ENCODE measurements at regions of chr6 and their contacts with region 1.

Region 1: DNA sequence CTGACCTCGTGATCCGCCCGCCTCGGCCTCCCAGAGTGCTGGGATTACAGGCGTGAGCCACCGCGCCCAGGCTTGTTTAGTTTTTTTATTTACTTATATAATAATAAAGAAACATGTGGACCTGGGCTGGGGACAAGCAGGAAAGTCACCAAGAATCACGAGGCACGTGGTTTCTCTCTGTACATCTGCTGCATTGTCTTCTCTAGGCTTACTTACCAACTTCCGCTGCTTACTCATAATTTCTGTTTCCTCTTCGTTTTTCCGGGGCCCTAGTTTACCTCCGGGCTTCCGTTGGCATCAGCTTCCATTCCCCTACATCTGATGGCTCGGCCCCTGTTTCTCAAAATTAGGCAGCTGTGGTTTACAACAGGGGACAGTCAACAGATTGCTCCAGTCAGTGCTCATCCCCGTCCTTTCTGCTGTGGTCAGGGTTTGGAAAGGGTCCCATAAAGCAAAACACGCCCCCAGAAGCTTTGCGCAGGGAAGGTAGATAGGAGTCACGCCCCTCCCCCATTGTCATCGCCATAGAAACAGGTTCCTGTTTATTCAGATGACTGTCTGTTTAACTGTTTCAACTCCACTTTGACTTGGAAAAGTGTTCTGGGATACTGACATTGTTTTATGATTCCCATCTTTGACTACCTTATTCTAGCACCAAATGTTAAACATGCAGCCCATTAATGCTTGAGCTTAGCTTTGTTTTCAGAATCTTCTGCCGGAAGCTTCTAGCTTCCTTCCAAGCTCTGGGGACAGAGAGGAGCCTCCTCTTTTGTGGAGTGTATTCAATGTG is 31.9 kb upstream of the TXLNB start:
- DNase-seq: peak; percentile 55 to 73
- H3K4me3 ChIP-seq: peak overlapping the region in 2 of 3 donors; percentile 39 to 58
- H3K27ac ChIP-seq: peak overlapping the region; percentile 66 to 87
- H3K4me1 ChIP-seq: no peaks in the 10 kb centered on the region
- H3K27me3 ChIP-seq: no peaks in the 10 kb centered on the region
- CTCF ChIP-seq: no peak
- POLR2A ChIP-seq: no peak

Region 2: DNA sequence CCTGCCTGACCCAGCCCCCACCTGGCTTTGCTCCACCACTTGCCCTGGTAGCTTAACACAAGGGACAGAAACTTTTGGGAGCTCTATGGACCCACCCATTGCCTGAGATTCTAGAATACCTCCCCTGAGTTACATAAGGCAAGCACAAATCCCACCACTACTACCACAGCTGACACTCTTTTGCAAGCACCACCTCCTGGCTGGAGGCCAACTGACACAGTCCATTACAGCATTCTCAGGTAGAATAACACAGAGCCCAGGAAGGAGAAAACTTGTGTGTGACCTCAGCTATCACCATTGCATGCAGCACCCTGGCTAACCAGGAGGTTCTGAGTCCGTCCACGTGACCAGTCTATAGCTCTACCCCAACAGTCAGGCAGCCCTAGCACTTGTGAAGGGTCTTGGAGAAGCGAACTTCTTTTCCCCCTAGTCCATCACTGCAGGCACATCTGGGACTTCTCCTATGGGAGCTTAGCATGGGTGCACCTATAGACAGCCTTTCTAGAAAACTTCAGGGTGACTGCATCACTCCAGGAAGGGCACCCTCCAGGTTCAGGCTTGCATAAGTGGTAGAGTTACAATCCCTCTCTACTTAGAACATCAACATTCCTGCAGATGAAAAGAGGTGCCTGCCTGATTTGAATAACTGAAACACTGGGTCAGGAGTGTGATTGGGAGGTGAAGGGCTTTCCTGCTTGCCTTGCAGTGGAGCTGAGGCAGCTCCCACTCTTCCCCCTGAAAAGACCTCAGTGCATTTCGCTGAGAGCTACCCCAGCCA is 20.7 kb after region 1 on chr6:
- intact Hi-C with region 1: loop called (anchors 2 kb)
- DNase-seq: no peak
- H3K4me3 ChIP-seq: no peak overlapping the region
- H3K27ac ChIP-seq: no peak overlapping the region
- H3K4me1 ChIP-seq: no peaks in the 10 kb centered on the region
- H3K27me3 ChIP-seq: no peaks in the 10 kb centered on the region
- CTCF ChIP-seq: no peak
- POLR2A ChIP-seq: no peak

Region 3: DNA sequence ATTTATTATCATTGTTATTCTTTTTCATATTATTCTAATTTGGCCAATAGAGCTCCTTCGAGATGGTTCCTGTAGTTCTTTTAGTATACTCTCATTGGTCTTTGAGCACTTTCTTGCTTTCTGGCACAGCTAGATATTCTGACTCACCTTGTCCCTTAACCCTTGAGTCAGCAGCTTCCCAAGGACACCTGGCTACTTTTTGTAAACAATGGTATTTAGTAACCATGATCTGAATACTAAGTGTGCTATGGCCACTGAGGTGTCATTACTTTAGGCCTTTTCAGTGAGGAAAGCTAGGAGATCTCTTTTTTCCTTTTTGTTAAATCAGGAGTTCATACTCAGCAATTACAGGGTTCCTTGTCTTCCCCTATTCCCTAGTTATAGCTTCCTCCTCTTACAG is 177.3 kb after region 1 on chr6:
- intact Hi-C with region 1: no loop called
- DNase-seq: no peak
- H3K4me3 ChIP-seq: no peak overlapping the region
- H3K27ac ChIP-seq: no peak overlapping the region
- H3K4me1 ChIP-seq: no peaks in the 10 kb centered on the region
- H3K27me3 ChIP-seq: no peaks in the 10 kb centered on the region
- CTCF ChIP-seq: no peak
- POLR2A ChIP-seq: no peak

Region 4: DNA sequence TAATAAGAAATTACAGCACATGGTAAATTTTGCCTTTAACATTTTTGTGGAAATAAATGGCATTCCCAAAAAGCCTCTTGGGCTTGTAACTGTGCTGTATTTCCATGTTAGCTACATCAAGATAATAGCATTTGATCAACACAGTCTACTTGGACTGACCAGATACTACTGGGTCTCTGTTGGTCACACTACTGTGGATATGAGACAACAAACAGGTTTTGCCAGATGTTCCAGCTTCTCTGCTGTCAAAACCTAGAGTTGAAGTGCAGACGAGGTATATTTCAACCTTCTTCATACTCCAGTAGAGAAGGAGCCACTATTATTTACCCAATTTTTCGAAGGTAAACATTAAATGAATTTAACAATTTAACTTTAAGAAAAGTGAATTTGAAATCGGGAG is 335.5 kb after region 1 on chr6:
- intact Hi-C with region 1: no loop called
- DNase-seq: no peak
- H3K4me3 ChIP-seq: no peak overlapping the region
- H3K27ac ChIP-seq: no peak overlapping the region
- H3K4me1 ChIP-seq: no peaks in the 10 kb centered on the region
- H3K27me3 ChIP-seq: no peaks in the 10 kb centered on the region
- CTCF ChIP-seq: no peak
- POLR2A ChIP-seq: no peak

Measured in breast epithelium (tissue), 4 donors.